HCT116 (cell line): ENCODE measurements at regions of chr12 and their contacts with region 1.

Region 1: GRCh38 chr12:42482445-42483237 is 106.9 kb downstream of the PRICKLE1 start:
- DNase-seq: no peak
- ATAC-seq: peak; percentile 87
- H3K4me3 ChIP-seq: peak overlapping the region; percentile 68 to 73
- H3K27ac ChIP-seq: peak overlapping the region; percentile 29; the same call in 1 of the 2 replicates
- H3K4me1 ChIP-seq: peaks cover 11% of the 10 kb centered on the region in 2 experiments; a peak in 2 of 4 replicates
- H3K27me3 ChIP-seq: no peaks in the 10 kb centered on the region
- CTCF ChIP-seq: peak; percentile 82 to 97 (median 91)
- POLR2A ChIP-seq: no peak
- RAD21 ChIP-seq: peak; percentile 89

Region 2: GRCh38 chr12:42070036-42070435 is 412.6 kb before region 1 on chr12:
- CTCF ChIA-PET with region 1: no interaction called
- POLR2A ChIA-PET with region 1: no interaction called
- RAD21 ChIA-PET with region 1: no interaction called
- intact Hi-C with region 1: no loop called
- DNase-seq: no peak
- ATAC-seq: no peak
- H3K4me3 ChIP-seq: no peak overlapping the region
- H3K27ac ChIP-seq: no peak overlapping the region
- H3K4me1 ChIP-seq: no peaks in the 10 kb centered on the region
- H3K27me3 ChIP-seq: no peaks in the 10 kb centered on the region
- CTCF ChIP-seq: no peak
- POLR2A ChIP-seq: no peak
- RAD21 ChIP-seq: no peak

Region 3: DNA sequence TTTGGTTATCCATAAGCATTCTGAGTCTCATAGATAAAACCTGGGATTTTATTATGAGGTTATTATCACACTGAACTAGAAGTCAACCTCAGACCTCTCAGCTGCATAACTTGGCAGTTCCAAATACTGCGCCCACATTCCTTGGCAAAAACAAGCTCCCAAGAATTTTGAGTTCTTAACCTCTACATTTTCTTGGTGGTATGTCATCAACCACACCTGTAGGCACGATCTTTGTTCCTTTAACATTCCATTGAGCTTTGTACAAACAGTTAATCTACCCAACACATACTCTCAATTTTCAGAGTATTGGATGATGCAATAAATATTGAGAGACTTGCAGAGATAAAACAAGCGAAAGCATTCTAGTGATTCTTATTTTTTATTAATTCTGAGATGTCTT is 478.8 kb after region 1 on chr12:
- CTCF ChIA-PET with region 1: no interaction called
- POLR2A ChIA-PET with region 1: no interaction called
- RAD21 ChIA-PET with region 1: no interaction called
- intact Hi-C with region 1: loop called (anchors 10 kb)
- DNase-seq: peak; percentile 85
- ATAC-seq: peak; percentile 88
- H3K4me3 ChIP-seq: peak overlapping the region in 1 of 2 experiments; percentile 31; a peak in 2 of 4 replicates
- H3K27ac ChIP-seq: peak overlapping the region; percentile 43; the same call in 1 of the 2 replicates
- H3K4me1 ChIP-seq: peaks cover 28 to 40% of the 10 kb centered on the region in 2 experiments
- H3K27me3 ChIP-seq: no peaks in the 10 kb centered on the region
- CTCF ChIP-seq: no peak
- POLR2A ChIP-seq: no peak
- RAD21 ChIP-seq: peak; percentile 26; the same call in 1 of the 2 replicates

Region 4: GRCh38 chr12:43131304-43131703 is 648.7 kb after region 1 on chr12:
- CTCF ChIA-PET with region 1: no interaction called
- POLR2A ChIA-PET with region 1: no interaction called
- RAD21 ChIA-PET with region 1: no interaction called
- intact Hi-C with region 1: no loop called
- DNase-seq: no peak
- ATAC-seq: no peak
- H3K4me3 ChIP-seq: no peak overlapping the region
- H3K27ac ChIP-seq: no peak overlapping the region
- H3K4me1 ChIP-seq: no peaks in the 10 kb centered on the region
- H3K27me3 ChIP-seq: no peaks in the 10 kb centered on the region
- CTCF ChIP-seq: no peak
- POLR2A ChIP-seq: no peak
- RAD21 ChIP-seq: no peak

Region 5: DNA sequence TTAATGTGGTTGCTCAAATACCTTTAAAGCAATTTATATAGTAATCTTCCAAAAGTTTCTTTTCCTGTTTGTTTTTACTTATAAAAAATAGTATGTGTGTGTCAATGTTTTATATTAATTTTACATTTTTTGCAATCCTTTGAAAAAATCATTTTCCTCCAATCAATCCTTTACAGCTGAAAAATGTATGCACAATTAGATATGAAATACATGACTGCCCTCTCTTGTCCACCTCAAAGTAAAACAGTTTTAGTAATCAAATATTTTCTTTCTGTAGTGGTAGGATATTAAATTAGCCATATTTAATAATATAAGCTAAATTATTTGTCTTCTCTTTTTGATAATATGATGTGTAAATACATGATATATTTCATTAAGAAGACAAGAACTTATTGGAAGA is 799.5 kb after region 1 on chr12:
- CTCF ChIA-PET with region 1: interaction called, 36 read pairs
- POLR2A ChIA-PET with region 1: no interaction called
- RAD21 ChIA-PET with region 1: no interaction called
- intact Hi-C with region 1: loop called (anchors 1 kb)
- DNase-seq: peak; percentile 16
- ATAC-seq: no peak
- H3K4me3 ChIP-seq: no peak overlapping the region
- H3K27ac ChIP-seq: no peak overlapping the region
- H3K4me1 ChIP-seq: no peaks in the 10 kb centered on the region
- H3K27me3 ChIP-seq: no peaks in the 10 kb centered on the region
- CTCF ChIP-seq: peak in 2 of 3 experiments; percentile 51; a peak in 3 of 6 replicates
- POLR2A ChIP-seq: no peak
- RAD21 ChIP-seq: peak; percentile 72

Region 6: DNA sequence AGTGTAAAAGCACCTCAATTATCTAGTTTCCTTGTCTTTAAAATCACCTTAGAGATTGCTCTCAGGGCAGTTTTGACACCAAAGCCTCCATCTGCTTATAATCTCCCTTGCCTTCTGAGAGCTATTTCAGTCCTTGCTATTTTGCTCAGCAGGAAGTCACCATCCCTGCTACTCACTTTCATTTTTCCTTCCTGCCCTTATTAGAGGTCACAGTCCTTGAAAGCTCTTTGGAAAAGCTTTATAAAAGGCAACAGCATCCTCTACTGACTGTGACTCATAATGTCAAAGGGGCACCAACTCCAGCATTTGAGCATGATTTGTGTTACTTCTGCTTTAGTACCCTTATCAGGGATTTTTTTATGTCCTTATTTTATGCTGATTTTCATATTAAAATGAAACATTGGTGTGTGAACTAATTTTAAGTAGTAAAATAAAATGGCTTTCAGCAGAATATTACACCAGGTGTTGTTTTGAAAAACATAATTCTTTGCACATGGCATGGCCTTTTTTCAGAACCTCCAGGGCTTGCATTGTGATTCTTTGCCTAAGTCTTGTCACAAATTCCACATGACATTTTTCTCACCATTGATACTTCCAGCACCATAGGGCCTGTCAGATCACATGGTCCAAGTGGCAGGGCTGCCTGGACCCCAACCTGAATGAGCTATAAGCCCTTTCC is 856.3 kb after region 1 on chr12:
- CTCF ChIA-PET with region 1: interaction called, 5 read pairs
- POLR2A ChIA-PET with region 1: no interaction called
- RAD21 ChIA-PET with region 1: no interaction called
- intact Hi-C with region 1: loop called (anchors 1 kb)
- DNase-seq: peak; percentile 16
- ATAC-seq: peak; percentile 84
- H3K4me3 ChIP-seq: no peak overlapping the region
- H3K27ac ChIP-seq: no peak overlapping the region
- H3K4me1 ChIP-seq: peaks cover 2 to 11% of the 10 kb centered on the region in 2 experiments; a peak in 2 of 4 replicates
- H3K27me3 ChIP-seq: no peaks in the 10 kb centered on the region
- CTCF ChIP-seq: peak in 2 of 3 experiments; percentile 34 to 48; a peak in 3 of 6 replicates
- POLR2A ChIP-seq: no peak
- RAD21 ChIP-seq: peak; percentile 72